ENCODE measurements at regions of chr12 and their contacts with region 1.

Region 1: GRCh38 chr12:110600254-110600653 is 13.7 kb upstream of the TCTN1 start:
- DNase-seq: no peak
- ATAC-seq: peak; percentile 35
- H3K4me3 Mint-ChIP-seq: no peak overlapping the region
- H3K27ac Mint-ChIP-seq: peak overlapping the region; percentile 13
- H3K4me1 Mint-ChIP-seq: peaks cover 9% of the 10 kb centered on the region
- H3K27me3 Mint-ChIP-seq: no peaks in the 10 kb centered on the region

Region 2: DNA sequence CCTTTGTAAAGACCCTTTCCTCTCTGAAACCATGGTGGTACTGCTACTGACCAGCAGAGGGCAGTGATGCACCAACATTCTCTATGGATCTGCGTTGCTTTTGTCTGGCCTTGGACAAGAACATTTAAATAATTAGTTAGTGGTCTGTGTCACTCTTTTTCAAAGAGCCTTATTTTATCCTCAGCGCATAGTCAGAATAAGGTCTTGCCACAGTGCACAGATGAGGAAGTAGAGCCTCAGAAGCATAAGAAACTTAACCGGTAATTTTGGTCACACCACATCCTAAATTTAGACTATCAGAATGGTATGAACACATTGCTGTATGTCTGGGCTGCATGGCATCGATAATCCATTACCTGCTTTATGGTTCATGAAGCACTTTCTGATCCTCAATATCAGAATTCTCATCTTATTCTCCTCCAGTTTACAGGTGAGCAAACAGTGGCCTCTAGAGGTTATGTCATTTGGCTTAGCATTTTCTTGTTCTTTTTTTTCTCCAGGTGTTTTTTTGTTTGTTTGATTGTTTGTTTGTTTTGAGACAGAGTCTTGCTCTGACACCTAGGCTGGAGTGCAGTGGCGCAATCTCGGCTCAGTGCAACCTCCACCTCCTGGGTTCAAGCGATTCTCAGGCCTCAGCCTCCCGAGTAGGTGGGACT is 499.8 kb before region 1 on chr12:
- CTCF ChIA-PET with region 1: interaction called, 3 read pairs
- POLR2A ChIA-PET with region 1: no interaction called
- intact Hi-C with region 1: loop called (anchors 2 kb)
- DNase-seq: peak; percentile 77
- ATAC-seq: peak; percentile 70
- H3K4me3 Mint-ChIP-seq: no peak overlapping the region
- H3K27ac Mint-ChIP-seq: no peak overlapping the region
- H3K4me1 Mint-ChIP-seq: peaks cover 9% of the 10 kb centered on the region
- H3K27me3 Mint-ChIP-seq: no peaks in the 10 kb centered on the region

Region 3: DNA sequence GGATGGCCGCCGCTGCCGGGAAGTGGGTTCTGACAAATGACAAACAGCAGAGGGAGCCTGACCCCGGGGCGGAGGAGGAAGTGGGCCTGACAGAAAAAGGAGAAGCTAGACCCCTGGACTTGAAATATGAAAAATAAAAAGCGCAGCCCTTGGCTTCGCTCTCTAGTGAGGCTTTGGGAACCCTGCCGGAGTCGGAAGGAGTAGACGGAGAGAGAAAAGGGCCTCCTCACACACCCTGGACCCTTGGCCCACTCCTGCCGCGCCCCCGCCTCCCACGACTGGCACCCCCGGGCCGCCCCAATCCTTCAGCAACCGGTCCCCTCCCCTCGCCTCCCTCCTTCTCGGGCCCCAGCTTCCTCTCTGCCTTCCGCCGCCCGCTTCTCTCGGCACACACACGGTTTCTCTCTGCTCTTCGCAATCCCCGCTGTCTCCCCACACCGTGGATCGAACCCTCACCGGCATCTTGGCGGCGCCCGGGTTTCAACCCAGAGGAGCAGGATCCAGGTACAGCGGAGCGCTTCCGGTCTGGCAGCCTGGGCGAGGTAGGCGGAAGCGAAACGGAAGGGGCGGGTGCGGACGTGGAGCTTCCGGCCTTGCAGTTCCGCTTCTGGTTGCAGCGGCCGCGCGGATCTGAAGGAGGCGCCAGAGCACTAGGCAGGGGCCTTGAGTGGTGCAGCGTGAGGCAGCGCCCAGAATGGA is 150.3 kb before region 1 on chr12 and contains the start of gene ARPC3:
- CTCF ChIA-PET with region 1: interaction called, 82 read pairs
- POLR2A ChIA-PET with region 1: interaction called, 6 read pairs
- intact Hi-C with region 1: loop called (anchors 1 to 2 kb)
- DNase-seq: peak; percentile 98
- ATAC-seq: peak; percentile 99
- H3K4me3 Mint-ChIP-seq: peak within 1 kb of the TSS; percentile 97
- H3K27ac Mint-ChIP-seq: peak within 1 kb of the TSS; percentile 100
- H3K4me1 Mint-ChIP-seq: peaks cover 38% of the 10 kb centered on the region
- H3K27me3 Mint-ChIP-seq: no peaks in the 10 kb centered on the region
- total RNA-seq, gene ARPC3: 244 to 422 TPM

Region 4: DNA sequence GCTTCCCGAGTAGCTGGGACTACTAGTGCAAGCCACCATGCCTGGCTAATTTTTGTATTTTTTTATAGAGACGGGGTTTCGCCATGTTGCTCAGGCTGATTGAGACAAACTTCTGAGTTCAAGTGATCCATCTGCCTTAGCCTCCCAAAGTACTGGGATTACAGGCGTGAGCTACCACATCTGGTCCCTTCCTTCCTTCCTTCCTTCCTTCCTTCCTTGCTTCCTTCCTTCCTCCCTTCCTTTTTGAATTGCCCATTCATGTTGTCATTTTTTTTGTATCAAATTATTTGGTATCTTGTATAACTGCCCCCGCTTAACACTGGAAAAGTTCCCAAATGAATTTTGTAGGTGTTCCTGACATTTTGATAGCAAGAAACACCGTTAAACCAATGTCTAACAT is 86.4 kb before region 1 on chr12:
- CTCF ChIA-PET with region 1: interaction called, 240 read pairs
- POLR2A ChIA-PET with region 1: no interaction called
- intact Hi-C with region 1: loop called (anchors 1 kb)
- DNase-seq: no peak
- ATAC-seq: no peak
- H3K4me3 Mint-ChIP-seq: no peak overlapping the region
- H3K27ac Mint-ChIP-seq: no peak overlapping the region
- H3K4me1 Mint-ChIP-seq: no peaks in the 10 kb centered on the region
- H3K27me3 Mint-ChIP-seq: peaks cover 2% of the 10 kb centered on the region

Region 5: GRCh38 chr12:110543252-110543959 is 56.8 kb before region 1 on chr12:
- CTCF ChIA-PET with region 1: interaction called, 202 read pairs
- POLR2A ChIA-PET with region 1: no interaction called
- intact Hi-C with region 1: no loop called
- DNase-seq: peak; percentile 18
- ATAC-seq: peak; percentile 39
- H3K4me3 Mint-ChIP-seq: no peak overlapping the region
- H3K27ac Mint-ChIP-seq: peak overlapping the region; percentile 69
- H3K4me1 Mint-ChIP-seq: peaks cover 46% of the 10 kb centered on the region
- H3K27me3 Mint-ChIP-seq: no peaks in the 10 kb centered on the region

Region 6: DNA sequence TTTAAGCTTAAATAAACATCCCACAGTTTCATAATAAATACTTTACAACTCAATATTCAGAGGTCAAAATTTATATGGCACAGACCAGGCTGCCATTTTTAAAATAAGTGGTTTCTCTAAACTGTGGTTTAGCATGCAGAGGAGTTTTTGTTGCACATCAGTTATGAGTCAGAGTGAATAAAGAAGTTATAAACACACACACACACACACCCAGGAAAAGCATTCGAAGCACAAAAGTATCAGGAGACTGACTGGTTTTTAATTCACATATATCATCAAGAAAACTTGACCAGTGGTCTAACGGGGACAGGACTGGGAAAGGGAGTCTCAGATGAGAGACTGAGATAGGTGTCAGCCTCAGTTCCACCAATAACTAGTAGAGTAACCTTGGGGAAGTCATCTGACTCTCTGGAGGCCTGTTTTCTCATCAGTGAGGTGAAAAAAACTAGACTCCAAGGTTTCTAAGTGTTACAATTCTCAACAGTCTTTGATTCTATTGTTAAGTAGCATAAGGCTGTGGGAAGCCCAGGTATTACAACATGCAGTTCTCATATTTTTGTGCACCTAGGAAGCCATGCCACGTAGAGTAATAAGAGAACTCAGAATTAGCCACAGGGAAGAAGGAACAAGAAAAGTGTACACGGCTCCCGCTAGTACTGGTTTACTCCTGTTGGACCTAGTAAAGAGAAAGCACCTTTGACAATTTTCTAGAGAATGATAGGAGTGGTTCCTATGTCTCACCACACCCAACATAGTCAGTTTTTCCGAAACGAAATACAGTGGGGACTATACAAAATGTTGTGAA is 22.3 kb before region 1 on chr12:
- CTCF ChIA-PET with region 1: interaction called, 15 read pairs
- POLR2A ChIA-PET with region 1: interaction called, 4 read pairs
- intact Hi-C with region 1: no loop called
- DNase-seq: peak; percentile 61
- ATAC-seq: peak; percentile 67
- H3K4me3 Mint-ChIP-seq: peak overlapping the region; percentile 91
- H3K27ac Mint-ChIP-seq: peak overlapping the region; percentile 100
- H3K4me1 Mint-ChIP-seq: peaks cover 80% of the 10 kb centered on the region
- H3K27me3 Mint-ChIP-seq: no peaks in the 10 kb centered on the region

Region 7: DNA sequence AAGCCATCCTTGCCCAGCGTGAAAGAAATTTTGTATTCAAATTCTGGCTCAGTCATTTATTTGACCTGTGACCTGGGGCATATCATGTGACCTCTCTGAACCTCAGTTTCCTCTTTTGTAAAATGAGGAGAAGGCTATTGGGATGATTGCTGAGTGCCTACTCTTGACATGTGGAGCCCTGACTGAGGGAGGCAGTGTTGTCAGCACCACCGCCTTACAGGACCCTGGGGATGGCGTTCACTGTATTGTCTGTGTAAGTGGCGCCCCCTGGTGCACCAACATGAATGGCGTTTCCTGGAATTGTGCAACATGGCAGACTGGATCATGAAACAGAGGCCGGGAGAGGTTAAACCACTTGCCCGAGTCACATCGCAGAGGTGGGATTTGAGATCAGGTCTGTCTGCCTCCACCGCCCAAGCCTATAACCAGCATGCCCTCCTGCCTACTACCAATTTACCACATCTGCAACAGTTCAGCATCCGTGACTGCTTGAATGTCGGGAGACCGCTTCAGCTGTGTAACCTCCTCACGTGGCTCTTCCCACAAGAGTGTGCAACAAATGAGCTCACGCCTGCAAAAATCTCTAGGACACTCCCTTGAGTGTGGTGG is 226.4 kb after region 1 on chr12:
- CTCF ChIA-PET with region 1: interaction called, 5 read pairs
- POLR2A ChIA-PET with region 1: interaction called, 9 read pairs
- intact Hi-C with region 1: loop called (anchors 1 to 2 kb)
- DNase-seq: peak; percentile 94
- ATAC-seq: peak; percentile 98
- H3K4me3 Mint-ChIP-seq: peak overlapping the region; percentile 34
- H3K27ac Mint-ChIP-seq: peak overlapping the region; percentile 17
- H3K4me1 Mint-ChIP-seq: peaks cover 7% of the 10 kb centered on the region
- H3K27me3 Mint-ChIP-seq: no peaks in the 10 kb centered on the region